ENCODE measurements at regions of chr6 and their contacts with region 1.

Region 1: DNA sequence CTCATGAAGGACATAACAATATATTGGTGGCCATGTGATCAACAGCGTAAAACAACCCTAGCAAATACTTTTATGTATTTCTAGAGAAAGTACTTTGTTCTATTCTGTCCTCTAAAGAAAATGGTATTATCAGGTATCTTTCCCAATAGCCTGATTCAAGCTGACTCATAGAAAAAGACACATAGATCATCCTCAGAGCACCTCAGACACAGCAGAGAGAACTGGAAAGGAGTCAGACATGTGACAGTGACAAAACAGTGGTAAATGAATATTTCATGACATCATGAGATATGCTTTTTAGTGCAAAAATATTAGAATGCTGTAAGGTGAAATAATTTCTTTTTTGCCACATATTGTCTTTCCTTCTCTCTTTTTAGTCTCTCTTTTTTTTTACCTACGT is 1355.0 kb upstream of the MAP3K7 start:
- DNase-seq: no peak
- H3K4me3 ChIP-seq: no peak overlapping the region
- H3K27ac ChIP-seq: no peak overlapping the region
- H3K4me1 ChIP-seq: no peaks in the 10 kb centered on the region
- H3K27me3 ChIP-seq: no peaks in the 10 kb centered on the region
- CTCF ChIP-seq: no peak

Region 2: GRCh38 chr6:91904586-91905164 is 37.2 kb before region 1 on chr6:
- CTCF ChIA-PET with region 1: no interaction called
- POLR2A ChIA-PET with region 1: no interaction called
- intact Hi-C with region 1: loop called (anchors 1 kb)
- DNase-seq: no peak
- H3K4me3 ChIP-seq: no peak overlapping the region
- H3K27ac ChIP-seq: no peak overlapping the region
- H3K4me1 ChIP-seq: no peaks in the 10 kb centered on the region
- H3K27me3 ChIP-seq: no peaks in the 10 kb centered on the region
- CTCF ChIP-seq: no peak

Region 3: DNA sequence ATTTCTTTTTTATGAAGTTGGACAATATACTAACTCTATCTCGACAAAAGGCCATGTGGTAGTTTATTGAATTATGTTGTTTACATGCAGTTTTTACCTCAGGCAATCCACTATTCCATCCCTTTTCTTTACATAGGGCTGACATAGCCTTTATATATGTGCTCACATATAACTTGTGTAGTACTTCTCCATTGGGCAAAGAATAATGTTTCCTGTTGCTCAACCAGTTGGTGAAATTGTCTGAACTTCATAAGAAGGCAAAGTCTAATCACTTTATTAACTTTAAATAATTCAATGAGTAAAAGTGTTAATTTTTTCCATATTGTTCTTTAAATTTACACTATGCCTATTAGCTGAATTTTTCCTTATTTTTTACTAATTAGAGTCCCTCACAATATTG is 205.4 kb after region 1 on chr6:
- CTCF ChIA-PET with region 1: no interaction called
- POLR2A ChIA-PET with region 1: no interaction called
- intact Hi-C with region 1: no loop called
- DNase-seq: no peak
- H3K4me3 ChIP-seq: no peak overlapping the region
- H3K27ac ChIP-seq: no peak overlapping the region
- H3K4me1 ChIP-seq: no peaks in the 10 kb centered on the region
- H3K27me3 ChIP-seq: no peaks in the 10 kb centered on the region
- CTCF ChIP-seq: no peak

Region 4: GRCh38 chr6:92181347-92181746 is 239.5 kb after region 1 on chr6:
- CTCF ChIA-PET with region 1: no interaction called
- POLR2A ChIA-PET with region 1: no interaction called
- intact Hi-C with region 1: no loop called
- DNase-seq: no peak
- H3K4me3 ChIP-seq: no peak overlapping the region
- H3K27ac ChIP-seq: no peak overlapping the region
- H3K4me1 ChIP-seq: no peaks in the 10 kb centered on the region
- H3K27me3 ChIP-seq: no peaks in the 10 kb centered on the region
- CTCF ChIP-seq: no peak

Measured in PC-9 (cell line).